AG04449 (cell line): ENCODE measurements at regions of chr6 and their contacts with region 1.

Region 1: DNA sequence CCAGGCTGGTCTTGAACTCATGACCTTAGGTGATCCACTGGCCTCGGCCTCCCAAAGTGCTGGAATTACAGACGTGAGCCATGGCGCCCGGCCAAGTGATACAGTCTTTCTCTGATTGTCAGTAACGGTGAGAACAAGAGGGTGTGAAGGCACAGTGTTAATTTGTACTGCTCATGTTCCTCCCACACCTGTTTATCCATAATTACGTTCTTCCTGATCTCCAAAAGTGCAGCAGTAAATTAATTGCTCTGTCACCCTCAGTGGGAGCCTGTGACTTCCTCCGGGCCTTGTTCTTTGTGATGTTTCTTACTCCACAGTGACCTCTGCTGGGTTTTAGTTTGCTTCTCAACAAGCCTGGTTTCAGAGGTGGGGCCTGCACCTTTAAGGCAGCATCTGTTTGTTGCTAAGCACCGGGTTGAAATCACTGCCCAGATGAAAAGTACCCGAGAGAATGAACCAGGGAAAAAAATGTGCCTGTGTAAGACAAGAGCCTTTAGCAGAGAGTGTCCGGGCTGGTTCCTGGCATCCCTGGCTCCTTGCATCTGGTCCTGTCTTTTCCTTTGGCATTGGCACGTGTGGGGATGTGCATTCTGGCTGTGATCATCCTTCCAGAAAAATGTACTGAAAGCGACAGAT is 89.1 kb upstream of the CLDN20 start:
- DNase-seq: no peak
- H3K4me3 ChIP-seq: no peak overlapping the region
- CTCF ChIP-seq: peak; percentile 53

Region 2: GRCh38 chr6:154868143-154868594 is 306.5 kb before region 1 on chr6:
- CTCF ChIA-PET with region 1: interaction called, 45 read pairs
- POLR2A ChIA-PET with region 1: interaction called, 3 read pairs
- DNase-seq: no peak
- H3K4me3 ChIP-seq: no peak overlapping the region
- CTCF ChIP-seq: peak; percentile 49

Region 3: DNA sequence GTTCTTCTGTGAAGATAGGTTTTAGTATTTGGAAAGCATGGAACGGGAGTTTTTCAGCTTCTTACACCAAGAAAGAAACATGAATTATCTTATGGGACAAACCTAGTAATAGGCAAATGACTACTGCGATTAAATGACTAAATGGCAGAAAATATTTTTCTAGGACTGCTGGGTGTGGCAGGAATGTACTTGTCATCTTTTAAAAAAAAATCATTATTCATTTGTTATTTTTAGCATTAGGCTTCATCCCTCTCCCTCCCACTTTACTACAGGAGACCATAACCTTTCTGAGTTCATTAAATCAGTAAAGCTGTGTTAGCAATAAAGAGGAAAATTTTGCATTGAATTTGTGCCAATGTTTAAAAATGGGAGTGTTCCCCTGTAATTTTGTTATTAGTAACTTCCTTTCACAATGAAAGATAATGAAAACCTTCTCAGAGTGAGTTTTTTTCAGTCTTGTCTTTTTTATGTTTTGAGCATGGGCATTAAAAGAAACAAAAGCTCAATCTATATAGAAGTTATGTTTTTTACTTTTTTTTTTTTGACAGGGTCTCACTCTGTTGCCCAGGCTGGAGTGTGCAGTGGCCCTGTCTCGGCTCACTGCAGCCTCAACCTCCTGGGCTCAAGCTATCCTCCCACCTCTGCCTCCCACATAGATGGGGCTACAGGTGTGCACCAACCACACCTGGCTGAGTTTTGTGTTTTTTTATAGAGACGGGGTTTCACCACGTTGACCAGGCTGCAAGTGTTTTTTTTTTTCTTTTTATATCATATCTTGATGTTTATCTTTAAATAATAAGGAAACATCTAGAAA is 16.5 kb before region 1 on chr6:
- CTCF ChIA-PET with region 1: interaction called, 12 read pairs
- POLR2A ChIA-PET with region 1: interaction called, 3 read pairs
- DNase-seq: no peak
- H3K4me3 ChIP-seq: no peak overlapping the region
- CTCF ChIP-seq: no peak

Region 4: GRCh38 chr6:155240905-155241600 is 66.4 kb after region 1 on chr6:
- CTCF ChIA-PET with region 1: interaction called, 292 read pairs
- POLR2A ChIA-PET with region 1: no interaction called
- DNase-seq: no peak
- H3K4me3 ChIP-seq: no peak overlapping the region
- CTCF ChIP-seq: no peak

Region 5: GRCh38 chr6:155253337-155253736 is 78.6 kb after region 1 on chr6:
- CTCF ChIA-PET with region 1: interaction called, 292 read pairs
- POLR2A ChIA-PET with region 1: no interaction called
- DNase-seq: no peak
- H3K4me3 ChIP-seq: no peak overlapping the region
- CTCF ChIP-seq: no peak

Region 6: GRCh38 chr6:155273431-155273830 is 98.7 kb after region 1 on chr6:
- CTCF ChIA-PET with region 1: interaction called, 34 read pairs
- POLR2A ChIA-PET with region 1: no interaction called
- DNase-seq: peak; percentile 79
- H3K4me3 ChIP-seq: no peak overlapping the region
- CTCF ChIP-seq: no peak

Region 7: DNA sequence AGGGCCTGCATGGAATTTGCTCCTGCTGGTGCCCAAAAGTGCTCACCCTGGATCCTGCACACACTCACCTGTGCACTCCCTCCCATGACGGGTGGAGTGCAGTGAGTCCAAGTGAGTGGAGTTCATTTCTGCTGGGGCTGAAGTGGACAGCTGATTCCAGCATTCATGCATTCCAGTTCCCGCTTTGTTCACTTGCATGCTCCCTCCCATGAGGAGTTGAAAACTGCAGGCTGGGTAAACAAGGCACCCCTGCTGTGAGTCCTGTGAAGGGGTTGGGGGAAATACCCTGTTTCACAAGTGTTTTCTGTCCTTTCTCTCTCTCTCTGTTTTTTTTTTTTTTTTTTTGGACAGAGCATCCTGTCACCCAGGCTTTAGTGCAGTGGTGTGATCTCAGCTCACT is 735.0 kb after region 1 on chr6:
- CTCF ChIA-PET with region 1: no interaction called
- POLR2A ChIA-PET with region 1: no interaction called
- DNase-seq: no peak
- H3K4me3 ChIP-seq: no peak overlapping the region
- CTCF ChIP-seq: no peak